ENCODE measurements at regions of chr3 and their contacts with region 1.

Region 1: DNA sequence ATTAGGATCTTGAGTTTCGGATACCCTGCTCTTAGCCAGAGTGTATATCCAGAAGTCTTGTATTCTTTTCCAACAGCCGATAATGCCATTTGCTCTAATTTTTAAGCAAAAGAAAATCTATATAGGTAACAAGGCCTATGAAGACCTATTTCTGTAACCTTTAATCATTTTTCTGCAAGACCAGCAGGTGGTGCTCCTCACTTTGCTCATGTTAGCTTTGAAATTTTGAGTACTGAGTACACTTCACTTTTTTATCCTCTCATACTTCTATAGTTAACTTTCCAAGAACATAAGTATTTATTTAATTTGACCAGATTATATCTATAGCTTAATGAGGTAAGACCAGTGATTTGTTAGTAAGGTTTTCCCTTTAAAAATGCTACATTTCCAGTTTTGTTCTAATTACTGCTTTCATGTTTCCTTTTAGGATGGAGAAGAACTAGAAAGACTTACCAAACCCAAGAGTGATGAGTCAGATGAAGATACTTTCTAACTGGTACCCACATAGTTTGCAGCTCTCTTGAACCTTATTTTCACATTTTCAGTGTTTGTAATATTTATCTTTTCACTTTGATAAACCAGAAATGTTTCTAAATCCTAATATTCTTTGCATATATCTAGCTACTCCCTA is 20.5 kb downstream of the SLC35A5 start:
- DNase-seq: peak; percentile 80
- ATAC-seq: peak; percentile 80
- H3K4me3 ChIP-seq: no peak overlapping the region
- H3K27ac ChIP-seq: no peak overlapping the region
- H3K4me1 ChIP-seq: peaks cover 4% of the 10 kb centered on the region
- H3K27me3 ChIP-seq: no peaks in the 10 kb centered on the region
- CTCF ChIP-seq: peak; percentile 69
- POLR2A ChIP-seq: no peak
- RAD21 ChIP-seq: peak; percentile 80

Region 2: DNA sequence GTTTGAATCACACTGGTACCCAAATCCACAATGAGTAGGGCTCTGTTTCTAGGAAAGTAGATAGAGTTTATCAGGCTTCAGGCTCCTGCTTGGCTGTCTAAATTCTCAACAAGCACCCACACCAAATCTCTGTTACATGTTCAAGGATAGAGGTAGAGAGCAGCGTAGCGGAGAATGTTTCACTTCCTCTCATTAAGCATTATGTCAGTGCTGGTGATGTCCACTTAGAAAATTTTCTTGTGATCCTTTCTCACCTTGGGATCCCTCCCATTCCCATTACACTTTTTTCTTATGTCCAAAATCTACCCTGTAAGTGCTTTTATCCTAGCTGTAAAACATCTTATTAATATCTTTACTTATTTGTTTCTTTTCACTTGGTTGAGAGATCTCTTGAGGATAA is 414.6 kb before region 1 on chr3:
- CTCF ChIA-PET with region 1: no interaction called
- POLR2A ChIA-PET with region 1: no interaction called
- dilution Hi-C with region 1: no loop called
- in situ Hi-C with region 1: no loop called
- intact Hi-C with region 1: no loop called
- DNase-seq: no peak
- ATAC-seq: no peak
- H3K4me3 ChIP-seq: no peak overlapping the region
- H3K27ac ChIP-seq: no peak overlapping the region
- H3K4me1 ChIP-seq: no peaks in the 10 kb centered on the region
- H3K27me3 ChIP-seq: no peaks in the 10 kb centered on the region
- CTCF ChIP-seq: no peak
- POLR2A ChIP-seq: no peak
- RAD21 ChIP-seq: no peak

Region 3: GRCh38 chr3:112350181-112350825 is 232.1 kb before region 1 on chr3:
- CTCF ChIA-PET with region 1: no interaction called
- POLR2A ChIA-PET with region 1: no interaction called
- dilution Hi-C with region 1: no loop called
- in situ Hi-C with region 1: no loop called
- intact Hi-C with region 1: no loop called
- DNase-seq: no peak
- ATAC-seq: no peak
- H3K4me3 ChIP-seq: no peak overlapping the region
- H3K27ac ChIP-seq: no peak overlapping the region
- H3K4me1 ChIP-seq: peaks cover 2% of the 10 kb centered on the region; the same call in 1 of the 2 replicates
- H3K27me3 ChIP-seq: peaks cover 6% of the 10 kb centered on the region
- CTCF ChIP-seq: no peak
- POLR2A ChIP-seq: no peak
- RAD21 ChIP-seq: no peak

Region 4: DNA sequence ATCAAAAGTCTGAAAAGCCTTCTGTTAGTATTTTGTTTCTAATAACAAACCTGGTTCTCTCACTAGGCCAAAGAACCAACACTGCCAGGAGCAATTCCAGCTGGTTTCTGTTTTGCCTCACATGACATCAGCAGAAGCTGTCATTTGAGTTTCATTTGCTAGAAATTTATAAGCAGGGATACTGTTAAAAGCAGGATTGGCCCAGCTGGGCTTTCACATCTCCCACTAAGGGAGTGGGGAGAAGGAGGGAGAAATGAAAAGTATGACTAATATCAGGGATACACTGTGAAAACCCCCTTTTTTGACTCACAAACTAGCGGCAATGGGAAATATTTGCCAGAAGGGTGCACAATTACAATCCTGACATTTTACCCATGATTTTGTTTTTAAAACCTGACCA is 53.3 kb after region 1 on chr3:
- CTCF ChIA-PET with region 1: interaction called, 15 read pairs
- POLR2A ChIA-PET with region 1: interaction called, 4 read pairs
- dilution Hi-C with region 1: no loop called
- in situ Hi-C with region 1: loop called (anchors 5 kb)
- intact Hi-C with region 1: loop called (anchors 2 kb)
- DNase-seq: peak; percentile 97
- ATAC-seq: peak; percentile 63
- H3K4me3 ChIP-seq: peak overlapping the region; percentile 62; the same call in 1 of the 2 replicates
- H3K27ac ChIP-seq: peak overlapping the region; percentile 82; the same call in 1 of the 2 replicates
- H3K4me1 ChIP-seq: peaks cover 31% of the 10 kb centered on the region
- H3K27me3 ChIP-seq: no peaks in the 10 kb centered on the region
- CTCF ChIP-seq: peak; percentile 30
- POLR2A ChIP-seq: peak; percentile 28; the same call in 1 of the 2 replicates
- RAD21 ChIP-seq: no peak

Region 5: DNA sequence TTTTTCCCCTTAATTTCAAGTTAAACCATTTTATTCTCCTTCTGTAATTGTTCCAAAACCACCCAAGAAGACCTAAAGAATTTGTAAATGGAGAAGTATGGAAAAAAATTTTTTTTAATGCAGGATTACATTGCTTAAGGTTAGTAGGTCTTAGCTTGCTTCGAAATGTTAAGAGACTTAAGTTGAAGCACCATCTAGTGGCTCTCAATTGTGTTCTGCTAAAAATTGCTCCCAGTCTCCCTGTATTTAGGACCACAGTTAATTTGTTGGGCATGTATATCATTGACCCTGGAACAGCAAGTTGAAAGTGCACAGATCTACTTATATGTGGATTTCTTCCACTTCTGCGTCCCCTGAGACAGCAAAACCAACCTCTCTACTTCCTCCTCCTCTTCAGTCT is 231.9 kb after region 1 on chr3:
- CTCF ChIA-PET with region 1: interaction called, 4 read pairs
- POLR2A ChIA-PET with region 1: no interaction called
- dilution Hi-C with region 1: no loop called
- in situ Hi-C with region 1: loop called (anchors 10 kb)
- intact Hi-C with region 1: loop called (anchors 1 kb)
- DNase-seq: peak; percentile 89
- ATAC-seq: peak; percentile 64
- H3K4me3 ChIP-seq: no peak overlapping the region
- H3K27ac ChIP-seq: peak overlapping the region; percentile 32; the same call in 1 of the 2 replicates
- H3K4me1 ChIP-seq: peaks cover 30% of the 10 kb centered on the region
- H3K27me3 ChIP-seq: no peaks in the 10 kb centered on the region
- CTCF ChIP-seq: peak; percentile 74
- POLR2A ChIP-seq: no peak
- RAD21 ChIP-seq: peak; percentile 83

Region 6: DNA sequence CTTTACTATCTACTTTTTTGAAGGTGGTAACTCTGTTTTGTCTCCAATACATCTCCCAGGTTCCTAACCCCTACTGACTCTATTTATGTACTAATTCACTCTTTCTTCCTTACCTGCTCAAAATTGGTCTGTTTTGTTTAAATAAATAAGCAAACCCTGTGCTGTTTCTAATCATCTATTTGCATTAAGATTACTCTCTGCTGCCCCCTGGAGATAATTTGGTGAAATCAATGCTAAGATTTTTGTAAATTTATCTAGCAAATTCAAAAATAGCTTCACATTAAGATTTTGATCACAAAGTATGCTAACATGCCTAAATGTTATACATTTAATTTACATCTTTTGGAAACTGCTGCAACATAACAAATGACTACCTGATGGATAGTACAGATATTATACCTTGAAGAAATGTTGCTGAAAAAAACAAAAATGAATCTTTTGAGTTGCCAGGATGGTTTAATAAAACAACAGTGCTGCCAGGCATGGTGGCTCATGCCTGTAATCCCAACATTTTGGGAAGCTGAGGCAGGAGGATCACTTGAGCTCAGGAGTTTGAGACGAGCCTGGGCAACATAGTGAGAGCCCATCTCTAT is 397.0 kb after region 1 on chr3:
- CTCF ChIA-PET with region 1: no interaction called
- POLR2A ChIA-PET with region 1: no interaction called
- dilution Hi-C with region 1: loop called (anchors 25 kb)
- in situ Hi-C with region 1: loop called (anchors 10 kb)
- intact Hi-C with region 1: loop called (anchors 1 kb)
- DNase-seq: peak; percentile 39
- ATAC-seq: no peak
- H3K4me3 ChIP-seq: no peak overlapping the region
- H3K27ac ChIP-seq: no peak overlapping the region
- H3K4me1 ChIP-seq: peaks cover 3% of the 10 kb centered on the region
- H3K27me3 ChIP-seq: no peaks in the 10 kb centered on the region
- CTCF ChIP-seq: peak; percentile 74
- POLR2A ChIP-seq: no peak
- RAD21 ChIP-seq: peak; percentile 61

Region 7: DNA sequence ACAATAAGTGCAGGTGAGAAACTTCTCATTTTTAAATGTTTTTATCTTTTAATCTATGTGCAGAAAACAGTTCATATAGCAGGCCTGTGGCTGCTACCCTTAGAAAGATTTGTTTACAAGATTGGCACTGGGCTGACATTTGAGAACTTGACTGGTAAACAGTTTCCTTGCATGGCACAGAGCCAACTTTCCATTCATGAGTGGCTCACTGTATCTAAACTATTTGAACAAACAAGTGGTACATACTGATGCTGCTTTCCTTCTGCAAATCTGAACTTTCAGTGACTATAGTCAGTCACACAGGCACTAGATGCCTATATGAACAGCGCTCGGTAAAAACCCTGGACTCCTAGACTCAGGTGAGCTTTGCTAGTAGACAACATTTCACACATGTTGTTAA is 402.1 kb after region 1 on chr3:
- CTCF ChIA-PET with region 1: no interaction called
- POLR2A ChIA-PET with region 1: no interaction called
- dilution Hi-C with region 1: loop called (anchors 25 kb)
- in situ Hi-C with region 1: loop called (anchors 10 kb)
- intact Hi-C with region 1: loop called (anchors 1 kb)
- DNase-seq: peak; percentile 12
- ATAC-seq: peak; percentile 21; the same call in 1 of the 2 replicates
- H3K4me3 ChIP-seq: no peak overlapping the region
- H3K27ac ChIP-seq: no peak overlapping the region
- H3K4me1 ChIP-seq: peaks cover 8% of the 10 kb centered on the region
- H3K27me3 ChIP-seq: peaks cover 2% of the 10 kb centered on the region; the same call in 1 of the 2 replicates
- CTCF ChIP-seq: no peak
- POLR2A ChIP-seq: no peak
- RAD21 ChIP-seq: no peak

Region 8: DNA sequence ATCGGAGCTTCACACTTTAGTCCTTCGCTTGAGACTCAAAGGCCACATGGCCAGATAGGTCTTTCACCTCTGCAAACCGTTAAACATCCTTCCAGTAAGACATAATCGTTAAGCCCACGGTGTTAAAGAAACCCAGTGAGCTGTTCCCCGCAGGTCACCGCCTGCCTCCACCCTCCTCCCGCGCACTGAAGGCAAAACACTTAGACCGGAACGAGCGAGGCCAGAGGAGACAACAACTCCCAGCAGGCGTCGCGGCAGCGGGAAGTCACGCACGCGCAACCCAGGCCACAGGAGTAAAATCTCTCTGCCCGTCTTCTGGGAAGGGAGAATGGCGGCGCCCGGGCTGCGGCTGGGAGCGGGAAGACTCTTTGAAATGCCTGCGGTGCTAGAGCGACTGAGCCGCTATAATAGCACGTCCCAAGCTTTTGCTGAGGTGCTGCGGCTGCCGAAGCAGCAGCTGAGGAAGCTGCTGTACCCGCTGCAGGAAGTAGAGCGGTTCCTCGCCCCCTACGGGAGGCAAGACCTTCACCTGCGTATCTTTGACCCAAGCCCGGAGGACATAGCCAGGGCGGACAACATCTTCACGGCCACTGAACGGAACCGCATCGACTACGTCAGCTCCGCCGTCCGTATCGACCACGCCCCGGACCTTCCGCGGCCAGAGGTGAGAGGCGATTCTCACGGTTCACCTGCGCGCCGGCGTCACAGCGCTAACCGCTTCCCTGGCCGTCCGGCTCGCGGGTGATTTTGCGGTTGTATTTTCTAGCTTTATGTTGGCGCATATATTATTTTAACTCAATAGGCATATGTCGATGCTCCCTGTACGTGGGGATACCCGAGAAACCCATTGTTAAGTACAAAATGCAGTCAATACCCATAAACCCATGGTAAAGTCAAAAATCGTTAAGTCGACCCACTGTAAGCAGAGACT is 408.6 kb after region 1 on chr3 and contains the start of gene GTPBP8:
- CTCF ChIA-PET with region 1: no interaction called
- POLR2A ChIA-PET with region 1: no interaction called
- dilution Hi-C with region 1: loop called (anchors 25 kb)
- in situ Hi-C with region 1: loop called (anchors 10 kb)
- intact Hi-C with region 1: no loop called
- DNase-seq: peak; percentile 84
- ATAC-seq: peak; percentile 98
- H3K4me3 ChIP-seq: peak within 1 kb of the TSS; percentile 75
- H3K27ac ChIP-seq: peak within 1 kb of the TSS; percentile 86
- H3K4me1 ChIP-seq: no peaks in the 10 kb centered on the region
- H3K27me3 ChIP-seq: peaks cover 2% of the 10 kb centered on the region; the same call in 1 of the 2 replicates
- CTCF ChIP-seq: no peak
- POLR2A ChIP-seq: peak; percentile 83
- RAD21 ChIP-seq: no peak
- total RNA-seq, gene GTPBP8: 15.4 and 19.4 TPM in 2 replicates

Region 9: DNA sequence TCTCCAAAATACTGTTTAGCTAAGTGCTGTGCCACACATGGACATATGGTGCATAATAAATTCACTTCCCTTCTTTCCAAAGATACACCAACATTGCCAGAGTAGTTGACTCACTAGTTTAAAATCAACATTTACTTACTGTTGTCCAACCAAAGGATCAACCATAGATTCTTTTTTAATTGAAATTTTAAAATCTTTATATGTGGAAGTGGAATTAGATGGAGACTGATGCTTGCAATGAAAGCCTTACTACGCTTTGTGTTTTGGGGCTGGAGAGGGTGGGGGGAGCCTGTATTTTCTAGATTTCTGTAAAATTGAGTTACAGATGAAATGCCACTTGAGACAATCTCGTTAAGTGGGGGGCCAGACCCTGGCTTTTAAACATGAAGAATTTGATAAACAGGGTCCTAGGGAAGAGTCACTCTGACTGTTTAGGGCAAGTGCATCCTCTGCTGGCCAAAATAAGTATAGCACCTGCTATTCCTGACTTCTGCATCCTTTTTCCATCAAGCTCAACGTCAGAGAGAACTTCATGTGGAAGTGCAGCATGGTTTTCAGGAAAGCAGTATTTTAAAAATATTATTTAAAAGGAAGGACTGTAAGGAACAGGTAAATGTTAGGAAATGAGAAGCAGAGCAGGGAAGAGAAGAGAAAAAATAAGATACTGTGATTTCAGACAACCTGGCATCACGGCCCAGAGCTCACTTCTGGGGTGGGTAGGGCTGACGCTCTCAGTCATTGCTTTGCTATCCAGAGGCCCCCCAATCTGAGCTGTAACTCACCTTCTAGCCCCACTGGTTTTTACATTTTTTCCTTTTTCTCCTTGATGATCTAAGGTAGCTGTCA is 705.7 kb after region 1 on chr3:
- CTCF ChIA-PET with region 1: no interaction called
- POLR2A ChIA-PET with region 1: no interaction called
- dilution Hi-C with region 1: no loop called
- in situ Hi-C with region 1: no loop called
- intact Hi-C with region 1: loop called (anchors 5 kb)
- DNase-seq: peak; percentile 72
- ATAC-seq: peak; percentile 64
- H3K4me3 ChIP-seq: no peak overlapping the region
- H3K27ac ChIP-seq: peak overlapping the region; percentile 59
- H3K4me1 ChIP-seq: peaks cover 14% of the 10 kb centered on the region
- H3K27me3 ChIP-seq: peaks cover 14% of the 10 kb centered on the region
- CTCF ChIP-seq: peak; percentile 99
- POLR2A ChIP-seq: peak; percentile 59; the same call in 1 of the 2 replicates
- RAD21 ChIP-seq: peak; percentile 97

Measured in IMR-90 (cell line).